K562 (cell line): ENCODE measurements at regions of chr10 and their contacts with region 1.

Region 1: GRCh38 chr10:73096449-73097304 is at the start of gene P4HA1:
- DNase-seq: peak; percentile 99
- ATAC-seq: peak; percentile 95
- H3K4me3 ChIP-seq: peak within 1 kb of the TSS; percentile 74
- H3K27ac ChIP-seq: peak within 1 kb of the TSS; percentile 90
- H3K4me1 ChIP-seq: peaks cover 9 to 12% of the 10 kb centered on the region in 2 experiments; a peak in 3 of 5 replicates
- H3K27me3 ChIP-seq: no peaks in the 10 kb centered on the region
- CTCF ChIP-seq: peak; percentile 91 to 97 (median 96)
- EP300 ChIP-seq: peak; percentile 34; the same call in 1 of the 2 replicates
- POLR2A ChIP-seq: peak; percentile 98
- RAD21 ChIP-seq: peak; percentile 78 to 90
- polyA plus RNA-seq, gene P4HA1: 21.0 to 28.6 TPM

Region 2: DNA sequence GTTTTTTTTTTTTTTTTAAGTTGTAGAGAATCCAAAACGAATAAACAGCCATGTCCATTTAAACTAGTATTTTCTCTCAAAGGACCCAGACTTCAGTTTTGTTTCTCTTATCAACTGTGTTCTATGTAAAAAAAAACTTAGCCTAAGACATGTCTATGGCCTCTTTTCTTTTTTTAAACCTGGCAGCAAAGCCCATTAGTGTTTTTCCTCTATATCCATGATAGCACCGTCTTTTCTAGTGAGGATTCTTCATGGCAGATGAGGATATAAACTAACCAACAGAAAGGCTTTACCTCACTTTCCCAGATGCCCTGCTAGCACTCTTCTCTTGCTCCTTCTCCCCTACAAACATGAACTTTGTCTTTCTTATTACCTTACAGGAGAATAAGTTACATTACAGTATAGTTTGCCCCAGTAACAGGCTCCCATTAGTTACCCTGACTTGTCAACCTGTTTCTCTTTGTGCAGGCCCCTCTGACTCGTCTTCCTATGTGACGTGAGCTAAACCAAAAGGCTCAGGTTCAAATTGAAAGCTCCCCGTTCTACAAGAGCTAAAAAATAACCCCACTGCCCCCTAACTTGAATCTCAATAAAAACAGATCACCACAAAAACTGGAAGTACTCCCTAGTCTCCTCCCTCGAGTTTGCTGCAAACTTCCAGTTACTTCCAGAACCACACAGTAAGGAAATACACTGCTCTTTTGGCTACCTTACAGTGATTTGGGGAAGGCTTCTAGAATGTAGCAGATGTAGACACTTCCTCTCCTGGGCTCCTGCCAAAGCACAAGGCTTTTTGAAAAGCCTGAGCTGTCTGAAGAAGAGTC is 20.1 kb before region 1 on chr10:
- CTCF ChIA-PET with region 1: no interaction called
- POLR2A ChIA-PET with region 1: interaction called, 45 read pairs
- in situ Hi-C with region 1: no loop called
- intact Hi-C with region 1: no loop called
- DNase-seq: no peak
- ATAC-seq: peak; percentile 65
- H3K4me3 ChIP-seq: no peak overlapping the region
- H3K27ac ChIP-seq: peak overlapping the region; percentile 17; the same call in 2 of the 3 replicates
- H3K4me1 ChIP-seq: peaks cover under 1 to 12% of the 10 kb centered on the region in 2 experiments; a peak in 3 of 5 replicates
- H3K27me3 ChIP-seq: no peaks in the 10 kb centered on the region
- CTCF ChIP-seq: no peak
- EP300 ChIP-seq: no peak
- POLR2A ChIP-seq: no peak
- RAD21 ChIP-seq: no peak

Region 3: DNA sequence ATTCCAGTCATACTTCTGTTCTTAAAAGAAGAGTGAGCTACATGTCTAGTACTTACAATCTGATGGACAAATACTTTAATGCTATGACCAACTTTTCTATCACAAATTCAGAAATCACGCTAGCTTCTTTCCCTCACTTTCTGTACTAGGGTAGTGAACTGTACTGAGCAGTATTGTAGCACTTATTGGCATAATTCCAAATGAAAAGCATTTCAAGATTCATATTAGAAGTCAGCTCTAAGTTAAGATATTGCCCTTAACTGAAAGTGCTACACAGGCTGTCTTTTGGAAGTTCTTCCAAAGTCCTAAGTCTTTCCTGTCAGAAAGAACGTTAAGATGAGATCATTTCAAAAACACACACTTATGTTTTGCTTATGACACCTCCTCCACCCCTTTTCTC is 13.5 kb before region 1 on chr10:
- CTCF ChIA-PET with region 1: no interaction called
- POLR2A ChIA-PET with region 1: interaction called, 45 read pairs
- in situ Hi-C with region 1: no loop called
- intact Hi-C with region 1: no loop called
- DNase-seq: no peak
- ATAC-seq: no peak; the same call in 2 of the 3 replicates
- H3K4me3 ChIP-seq: no peak overlapping the region
- H3K27ac ChIP-seq: peak overlapping the region; percentile 0; the same call in 1 of the 3 replicates
- H3K4me1 ChIP-seq: peaks cover 4 to 22% of the 10 kb centered on the region in 2 experiments; a peak in 3 of 5 replicates
- H3K27me3 ChIP-seq: no peaks in the 10 kb centered on the region
- CTCF ChIP-seq: no peak
- EP300 ChIP-seq: no peak
- POLR2A ChIP-seq: no peak
- RAD21 ChIP-seq: no peak

Region 4: GRCh38 chr10:73110345-73110849 is 13.7 kb after region 1 on chr10 and contains the start of gene NUDT13:
- CTCF ChIA-PET with region 1: interaction called, 3 read pairs
- POLR2A ChIA-PET with region 1: interaction called, 112 read pairs
- in situ Hi-C with region 1: no loop called
- intact Hi-C with region 1: loop called (anchors 1 kb)
- DNase-seq: peak; percentile 63 to 91 (median 76)
- ATAC-seq: peak; percentile 96
- H3K4me3 ChIP-seq: peak within 1 kb of the TSS; percentile 47
- H3K27ac ChIP-seq: peak within 1 kb of the TSS; percentile 89
- H3K4me1 ChIP-seq: peaks cover 3 to 5% of the 10 kb centered on the region in 2 experiments; a peak in 2 of 5 replicates
- H3K27me3 ChIP-seq: no peaks in the 10 kb centered on the region
- CTCF ChIP-seq: peak in 1 of 3 experiments; percentile 34; a peak in 2 of 6 replicates
- EP300 ChIP-seq: peak; percentile 45; the same call in 1 of the 2 replicates
- POLR2A ChIP-seq: no peak
- RAD21 ChIP-seq: no peak; a peak in 1 of 4 replicates
- polyA plus RNA-seq, gene NUDT13: 5.2 to 7.1 TPM

Region 5: GRCh38 chr10:73159038-73159648 is 62.5 kb after region 1 on chr10:
- CTCF ChIA-PET with region 1: interaction called, 18 read pairs
- POLR2A ChIA-PET with region 1: interaction called, 5 read pairs
- in situ Hi-C with region 1: no loop called
- intact Hi-C with region 1: loop called (anchors 1 kb)
- DNase-seq: peak; percentile 54 to 79 (median 64)
- ATAC-seq: peak; percentile 82
- H3K4me3 ChIP-seq: no peak overlapping the region
- H3K27ac ChIP-seq: peak overlapping the region; percentile 1; the same call in 1 of the 3 replicates
- H3K4me1 ChIP-seq: no peaks in the 10 kb centered on the region; a peak in 1 of 5 replicates
- H3K27me3 ChIP-seq: no peaks in the 10 kb centered on the region
- CTCF ChIP-seq: peak; percentile 55 to 90 (median 80); a peak in 5 of 6 replicates
- EP300 ChIP-seq: no peak
- POLR2A ChIP-seq: no peak
- RAD21 ChIP-seq: peak; percentile 80 to 83

Region 6: GRCh38 chr10:73167783-73168464 is 71.2 kb after region 1 on chr10 and contains the starts of genes ECD and FAM149B1:
- CTCF ChIA-PET with region 1: interaction called, 3 read pairs
- POLR2A ChIA-PET with region 1: interaction called, 8 read pairs
- in situ Hi-C with region 1: no loop called
- intact Hi-C with region 1: loop called (anchors 2 kb)
- DNase-seq: peak; percentile 97 to 99 (median 97)
- ATAC-seq: peak; percentile 99
- H3K4me3 ChIP-seq: peak within 1 kb of the TSS; percentile 67
- H3K27ac ChIP-seq: peak within 1 kb of the TSS; percentile 88
- H3K4me1 ChIP-seq: peaks cover 3 to 4% of the 10 kb centered on the region in 2 experiments; a peak in 2 of 5 replicates
- H3K27me3 ChIP-seq: no peaks in the 10 kb centered on the region
- CTCF ChIP-seq: peak; percentile 48 to 66 (median 56)
- EP300 ChIP-seq: peak; percentile 46; the same call in 1 of the 2 replicates
- POLR2A ChIP-seq: peak; percentile 98
- RAD21 ChIP-seq: peak in 1 of 2 experiments; percentile 51; a peak in 2 of 4 replicates
- polyA plus RNA-seq, gene ECD: 33.5 to 75.3 TPM
- polyA plus RNA-seq, gene FAM149B1: 14.4 to 16.9 TPM

Region 7: GRCh38 chr10:73218431-73219191 is 121.9 kb after region 1 on chr10:
- CTCF ChIA-PET with region 1: no interaction called
- POLR2A ChIA-PET with region 1: no interaction called
- in situ Hi-C with region 1: no loop called
- intact Hi-C with region 1: no loop called
- DNase-seq: peak; percentile 37 to 67 (median 54)
- ATAC-seq: peak; percentile 90
- H3K4me3 ChIP-seq: no peak overlapping the region
- H3K27ac ChIP-seq: no peak overlapping the region
- H3K4me1 ChIP-seq: peaks cover 0 to 9% of the 10 kb centered on the region in 2 experiments; a peak in 2 of 5 replicates
- H3K27me3 ChIP-seq: no peaks in the 10 kb centered on the region
- CTCF ChIP-seq: peak; percentile 52 to 71 (median 61); a peak in 5 of 6 replicates
- EP300 ChIP-seq: no peak
- POLR2A ChIP-seq: no peak
- RAD21 ChIP-seq: peak; percentile 25 to 72; a peak in 3 of 4 replicates

Region 8: GRCh38 chr10:73501651-73502050 is 405.0 kb after region 1 on chr10:
- CTCF ChIA-PET with region 1: no interaction called
- POLR2A ChIA-PET with region 1: no interaction called
- in situ Hi-C with region 1: no loop called
- intact Hi-C with region 1: no loop called
- DNase-seq: no peak
- ATAC-seq: no peak
- H3K4me3 ChIP-seq: no peak overlapping the region
- H3K27ac ChIP-seq: peak overlapping the region; percentile 37; the same call in 1 of the 3 replicates
- H3K4me1 ChIP-seq: peaks cover 7 to 20% of the 10 kb centered on the region in 2 experiments; a peak in 4 of 5 replicates
- H3K27me3 ChIP-seq: no peaks in the 10 kb centered on the region
- CTCF ChIP-seq: no peak
- EP300 ChIP-seq: no peak
- POLR2A ChIP-seq: no peak
- RAD21 ChIP-seq: no peak